CD4-positive, alpha-beta memory T cell (primary cell): ENCODE measurements at regions of chr6 and their contacts with region 1.

Region 1: GRCh38 chr6:41787219-41787917 is at the start of gene TOMM6:
- DNase-seq: peak; percentile 93 to 95 (median 94)
- H3K4me3 ChIP-seq: peak within 1 kb of the TSS; percentile 84 to 100
- H3K4me3 Mint-ChIP-seq: peak within 1 kb of the TSS; percentile 95 to 99 (median 98)
- H3K27ac ChIP-seq: peak within 1 kb of the TSS; percentile 90
- H3K27ac Mint-ChIP-seq: peak within 1 kb of the TSS; percentile 92 to 98 (median 98)
- H3K4me1 ChIP-seq: peaks cover 16% of the 10 kb centered on the region
- H3K4me1 Mint-ChIP-seq: peaks cover 7 to 29% (median 12%) of the 10 kb centered on the region in 4 donors
- H3K27me3 ChIP-seq: no peaks in the 10 kb centered on the region
- H3K27me3 Mint-ChIP-seq: peaks cover 0 to 3% of the 10 kb centered on the region in 2 donors
- total RNA-seq, gene TOMM6: 118 to 126 TPM

Region 2: DNA sequence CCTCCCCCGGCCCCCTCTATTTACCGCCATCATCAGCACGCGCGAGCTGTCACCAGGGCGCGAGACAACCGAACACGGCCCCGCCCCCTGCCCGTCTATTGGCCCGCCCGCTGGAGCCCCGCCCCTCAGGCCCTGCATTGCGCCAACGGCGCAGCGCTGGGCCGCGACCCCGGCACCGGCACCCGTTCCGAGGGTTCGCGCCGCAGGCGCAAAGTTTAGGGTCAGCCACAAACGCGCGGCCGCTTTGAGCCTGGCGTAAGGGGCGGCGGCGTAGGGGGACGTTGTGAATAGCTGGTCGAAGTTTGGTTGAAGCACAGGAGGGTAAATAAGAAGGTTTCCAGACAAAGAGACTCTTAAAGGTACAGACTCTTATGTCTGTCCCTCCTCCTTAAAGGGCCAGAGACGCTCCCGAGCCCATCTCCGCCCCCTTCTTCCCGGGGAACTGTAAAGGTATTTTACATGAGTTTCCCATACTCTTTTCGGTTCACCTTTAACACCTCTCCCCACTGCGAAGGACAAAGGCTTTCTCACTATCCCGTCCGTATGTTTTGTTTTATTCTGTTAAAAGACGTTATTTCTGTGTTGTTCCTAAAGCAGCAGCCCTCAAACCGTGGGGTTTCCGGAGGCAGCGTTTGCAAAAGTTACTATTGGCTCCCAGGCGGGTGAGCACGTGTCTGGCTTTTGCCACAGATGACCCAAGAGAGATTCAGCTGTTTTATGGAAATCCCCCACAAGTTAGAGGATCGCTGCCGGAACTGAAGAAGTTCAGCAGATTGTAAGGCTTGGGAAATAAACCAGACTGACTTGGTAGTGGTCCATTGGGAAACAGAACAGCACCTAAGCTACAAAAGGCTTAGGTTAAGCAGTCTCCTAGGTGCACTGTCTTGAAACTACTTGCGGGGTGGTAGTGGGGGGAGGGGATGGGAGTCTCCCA is 108.2 kb after region 1 on chr6 and contains the start of gene USP49:
- CTCF ChIA-PET with region 1: interaction called, 3 read pairs
- POLR2A ChIA-PET with region 1: interaction called, 10 read pairs
- intact Hi-C with region 1: loop called (anchors 1 kb)
- DNase-seq: peak; percentile 86 to 92 (median 88)
- H3K4me3 ChIP-seq: peak within 1 kb of the TSS; percentile 74 to 91
- H3K4me3 Mint-ChIP-seq: peak within 1 kb of the TSS in 2 of 8 donors; percentile 90 to 98
- H3K27ac ChIP-seq: peak within 1 kb of the TSS; percentile 77
- H3K27ac Mint-ChIP-seq: peak within 1 kb of the TSS in 6 of 7 donors; percentile 79 to 94 (median 90)
- H3K4me1 ChIP-seq: peaks cover 23% of the 10 kb centered on the region
- H3K4me1 Mint-ChIP-seq: peaks cover 9 to 12% (median 10%) of the 10 kb centered on the region in 4 donors
- H3K27me3 ChIP-seq: no peaks in the 10 kb centered on the region
- H3K27me3 Mint-ChIP-seq: no peaks in the 10 kb centered on the region
- total RNA-seq, gene USP49: 1.8 to 2.4 TPM

Region 3: DNA sequence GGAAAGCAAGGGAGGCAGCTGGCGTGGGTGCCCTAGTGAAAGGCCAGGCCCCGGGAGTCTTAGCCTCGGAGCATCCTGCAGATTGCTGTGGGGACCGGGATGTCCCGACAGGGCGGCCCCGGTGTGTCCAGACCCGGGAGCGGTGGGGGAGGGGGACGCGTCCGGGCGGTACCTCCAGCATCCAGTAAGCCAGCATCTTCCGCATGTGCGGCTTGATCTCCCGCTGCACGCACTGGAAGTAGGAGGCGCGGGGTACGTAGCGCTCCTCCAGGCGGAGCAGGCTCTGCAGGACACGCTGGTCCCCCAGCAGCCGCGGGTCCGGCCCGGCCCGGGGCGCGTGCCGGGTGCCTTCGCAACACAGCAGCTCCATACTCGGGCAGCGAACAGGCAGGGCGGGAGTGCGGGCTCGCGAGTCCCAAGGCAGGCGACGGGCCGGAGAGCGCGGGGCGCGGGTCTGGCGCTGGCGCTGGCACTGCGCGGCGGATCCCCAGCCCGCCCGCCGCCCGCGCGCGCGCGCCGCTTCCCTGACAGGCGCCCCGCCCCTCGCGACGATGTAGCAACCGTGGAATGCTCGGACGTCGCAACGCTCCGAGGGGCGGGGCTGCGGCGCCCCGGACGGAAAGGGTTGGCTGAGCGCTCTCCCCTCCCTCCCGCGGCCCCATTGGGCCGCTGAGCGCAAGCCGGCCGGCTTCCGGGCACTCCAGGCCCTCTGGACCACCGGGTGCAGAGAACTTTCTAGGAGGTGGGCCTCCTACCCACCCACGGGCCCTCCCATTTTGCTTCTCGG is 154.1 kb after region 1 on chr6 and contains the start of gene CCND3:
- CTCF ChIA-PET with region 1: interaction called, 5 read pairs
- POLR2A ChIA-PET with region 1: interaction called, 7 read pairs
- intact Hi-C with region 1: loop called (anchors 1 kb)
- DNase-seq: peak; percentile 77 to 86 (median 79)
- H3K4me3 ChIP-seq: peak within 1 kb of the TSS; percentile 75 to 76
- H3K4me3 Mint-ChIP-seq: peak within 1 kb of the TSS; percentile 83 to 99 (median 95)
- H3K27ac ChIP-seq: peak within 1 kb of the TSS; percentile 80
- H3K27ac Mint-ChIP-seq: peak within 1 kb of the TSS; percentile 91 to 96 (median 93)
- H3K4me1 ChIP-seq: peaks cover 77% of the 10 kb centered on the region
- H3K4me1 Mint-ChIP-seq: peaks cover 48 to 80% (median 61%) of the 10 kb centered on the region in 4 donors
- H3K27me3 ChIP-seq: no peaks in the 10 kb centered on the region
- H3K27me3 Mint-ChIP-seq: no peaks in the 10 kb centered on the region
- total RNA-seq, gene CCND3: 223 to 242 TPM

Region 4: GRCh38 chr6:42104095-42104806 is 316.9 kb after region 1 on chr6:
- CTCF ChIA-PET with region 1: interaction called, 15 read pairs
- POLR2A ChIA-PET with region 1: interaction called, 3 read pairs
- intact Hi-C with region 1: loop called (anchors 2 kb)
- DNase-seq: peak; percentile 65 to 77 (median 73)
- H3K4me3 ChIP-seq: peak overlapping the region in 1 of 2 donors; percentile 53
- H3K4me3 Mint-ChIP-seq: peak overlapping the region; percentile 42 to 84 (median 70)
- H3K27ac ChIP-seq: no peak overlapping the region
- H3K27ac Mint-ChIP-seq: peak overlapping the region in 1 of 7 donors; percentile 42
- H3K4me1 ChIP-seq: peaks cover 6% of the 10 kb centered on the region
- H3K4me1 Mint-ChIP-seq: peaks cover 0 to 14% (median 6%) of the 10 kb centered on the region in 4 donors
- H3K27me3 ChIP-seq: no peaks in the 10 kb centered on the region
- H3K27me3 Mint-ChIP-seq: peaks cover 2 to 6% of the 10 kb centered on the region in 2 donors

Region 5: DNA sequence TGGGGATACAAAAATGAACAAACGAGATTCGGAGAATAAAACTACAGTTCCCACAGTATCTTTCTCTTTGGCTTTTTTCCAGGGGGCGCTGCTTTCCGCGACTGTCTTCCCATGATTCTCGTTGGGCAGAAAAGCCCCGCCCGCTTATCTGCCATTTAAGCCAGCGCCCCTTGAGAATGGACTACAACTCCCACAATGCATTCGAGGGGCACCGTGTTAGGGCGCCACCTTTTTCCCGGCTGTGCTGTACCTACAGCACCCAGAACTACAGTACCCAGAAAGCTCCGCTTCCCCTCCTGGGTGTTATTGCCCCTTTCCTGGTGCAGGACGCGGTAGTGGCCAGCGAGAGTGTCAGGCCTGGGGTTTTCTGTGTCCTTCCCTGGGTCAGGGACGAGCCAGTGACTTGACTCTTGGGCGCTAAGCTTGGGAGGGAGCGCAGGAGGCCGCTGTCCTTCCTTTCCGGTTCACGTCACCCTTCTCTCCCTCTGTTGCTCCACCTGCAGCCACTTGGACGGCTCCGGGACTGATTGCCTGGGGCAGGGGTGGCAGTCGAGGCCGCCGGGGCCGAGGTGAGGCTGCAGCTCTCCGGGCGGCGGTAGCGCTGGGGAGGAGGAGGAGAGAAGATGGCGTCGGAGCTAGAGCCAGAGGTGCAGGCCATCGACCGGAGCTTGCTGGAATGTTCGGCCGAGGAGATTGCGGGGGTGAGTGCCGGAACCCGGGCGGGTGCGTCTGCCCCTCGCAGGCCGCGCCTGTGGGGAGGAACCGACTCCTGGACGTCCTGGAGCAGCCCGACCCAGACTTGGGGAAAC is 776.5 kb after region 1 on chr6 and contains the start of gene UBR2:
- CTCF ChIA-PET with region 1: no interaction called
- POLR2A ChIA-PET with region 1: interaction called, 4 read pairs
- intact Hi-C with region 1: loop called (anchors 1 kb)
- DNase-seq: peak; percentile 92 to 98 (median 95)
- H3K4me3 ChIP-seq: peak within 1 kb of the TSS; percentile 98 to 100
- H3K4me3 Mint-ChIP-seq: peak within 1 kb of the TSS; percentile 92 to 100 (median 98)
- H3K27ac ChIP-seq: peak within 1 kb of the TSS; percentile 94
- H3K27ac Mint-ChIP-seq: peak within 1 kb of the TSS; percentile 90 to 98 (median 96)
- H3K4me1 ChIP-seq: peaks cover 33% of the 10 kb centered on the region
- H3K4me1 Mint-ChIP-seq: peaks cover 21 to 43% (median 28%) of the 10 kb centered on the region in 4 donors
- H3K27me3 ChIP-seq: no peaks in the 10 kb centered on the region
- H3K27me3 Mint-ChIP-seq: peaks cover 0 to 1% of the 10 kb centered on the region in 2 donors
- total RNA-seq, gene UBR2: 55.0 to 55.7 TPM

Region 6: DNA sequence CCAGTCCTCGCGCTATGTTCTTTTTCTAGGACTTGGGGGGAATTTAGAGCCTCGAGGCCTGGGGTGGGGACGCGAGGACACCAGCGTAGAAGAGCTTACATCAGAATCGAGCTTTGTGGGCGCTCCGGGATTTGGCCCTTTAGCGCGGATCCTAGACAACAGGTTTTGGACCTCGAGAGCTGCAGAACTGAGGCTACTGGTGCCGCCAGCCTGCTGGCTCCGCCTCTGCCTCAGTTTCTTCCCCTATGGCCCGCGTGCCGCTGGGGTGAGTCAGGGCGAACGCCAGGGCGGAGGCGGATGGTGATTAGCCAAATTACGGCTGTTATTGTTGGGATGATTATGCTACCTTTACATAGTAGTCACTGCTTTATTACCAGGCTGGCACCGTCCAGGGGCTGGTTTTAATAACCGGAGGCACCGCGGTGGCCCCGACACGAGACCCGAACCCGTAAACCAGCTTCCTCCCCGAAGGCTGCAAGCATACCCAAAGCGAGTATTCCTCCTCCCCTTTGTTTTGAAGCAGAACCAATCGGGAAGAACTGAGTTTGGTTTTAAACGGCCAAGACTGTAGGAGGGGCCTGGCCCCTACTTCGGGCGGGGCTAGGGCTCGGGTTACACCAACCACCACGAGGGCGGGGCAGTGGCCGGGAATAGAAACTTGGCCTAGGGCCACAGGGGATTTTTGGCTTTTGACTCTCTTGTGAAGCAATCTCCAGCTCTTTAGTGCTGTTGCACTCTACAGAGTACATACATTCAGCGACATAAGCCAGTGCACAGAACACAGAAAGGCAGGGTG is 1842.3 kb after region 1 on chr6:
- CTCF ChIA-PET with region 1: no interaction called
- POLR2A ChIA-PET with region 1: interaction called, 3 read pairs
- intact Hi-C with region 1: loop called (anchors 1 kb)
- DNase-seq: peak; percentile 82 to 96 (median 86)
- H3K4me3 ChIP-seq: peak overlapping the region; percentile 89 to 95
- H3K4me3 Mint-ChIP-seq: peak overlapping the region; percentile 98 to 100 (median 99)
- H3K27ac ChIP-seq: peak overlapping the region; percentile 84
- H3K27ac Mint-ChIP-seq: peak overlapping the region; percentile 97 to 99 (median 98)
- H3K4me1 ChIP-seq: peaks cover 33% of the 10 kb centered on the region
- H3K4me1 Mint-ChIP-seq: peaks cover 29 to 51% (median 35%) of the 10 kb centered on the region in 4 donors
- H3K27me3 ChIP-seq: no peaks in the 10 kb centered on the region
- H3K27me3 Mint-ChIP-seq: no peaks in the 10 kb centered on the region